ENCODE measurements at regions of chr2 and their contacts with region 1.

Region 1: DNA sequence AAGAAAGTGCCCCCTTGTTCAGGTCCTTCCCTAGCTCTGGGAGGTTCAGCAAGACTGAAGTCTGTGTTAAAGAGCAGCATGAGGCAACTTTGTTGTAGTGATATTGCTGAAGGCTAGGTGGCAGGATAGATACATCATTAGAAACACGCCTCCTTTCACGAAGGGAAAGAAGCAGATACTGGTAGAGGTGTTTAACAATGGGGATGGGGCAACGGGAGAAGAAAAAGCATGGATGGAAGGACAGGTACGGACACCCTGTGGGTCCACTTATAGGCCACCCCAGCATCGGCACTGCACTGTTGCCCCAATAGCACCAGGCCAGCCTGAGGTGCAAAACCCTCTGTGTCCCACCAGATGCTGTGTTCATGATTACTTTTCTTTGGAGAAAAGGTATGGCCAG is 3.5 kb upstream of the IGFBP5 start:
- DNase-seq: peak in 1 of 7 donors; percentile 38
- H3K4me3 ChIP-seq: no peak overlapping the region
- H3K27ac ChIP-seq: peak overlapping the region in 4 of 5 donors; percentile 5 to 42 (median 20)
- H3K4me1 ChIP-seq: peaks cover 16 to 49% of the 10 kb centered on the region in 2 donors
- H3K27me3 ChIP-seq: no peaks in the 10 kb centered on the region
- CTCF ChIP-seq: peak; percentile 30 to 82 (median 68)
- POLR2A ChIP-seq: no peak

Region 2: GRCh38 chr2:216619411-216620393 is 79.2 kb before region 1 on chr2:
- intact Hi-C with region 1: no loop called
- DNase-seq: no peak
- H3K4me3 ChIP-seq: no peak overlapping the region
- H3K27ac ChIP-seq: no peak overlapping the region
- H3K4me1 ChIP-seq: no peaks in the 10 kb centered on the region
- H3K27me3 ChIP-seq: no peaks in the 10 kb centered on the region
- CTCF ChIP-seq: no peak
- POLR2A ChIP-seq: no peak

Region 3: DNA sequence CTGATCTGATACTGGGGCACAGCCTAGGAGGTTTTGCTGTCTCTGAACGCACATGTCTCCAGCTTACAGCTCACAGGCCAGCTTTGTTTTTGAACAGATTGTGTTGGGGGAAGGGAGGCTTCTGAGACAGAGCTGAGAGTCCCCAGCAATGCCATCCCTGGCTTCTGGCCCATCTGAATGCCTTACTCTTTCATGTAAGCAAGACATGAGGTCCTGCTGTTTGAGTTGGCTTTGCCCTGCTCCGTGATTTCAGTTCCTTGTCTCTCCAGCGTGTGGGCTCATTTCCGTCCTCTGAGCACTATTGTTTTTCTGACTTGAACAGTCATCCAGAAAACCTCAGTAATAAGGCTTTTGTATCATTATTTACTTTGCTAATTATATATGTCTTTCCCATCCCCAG is 355.9 kb after region 1 on chr2:
- intact Hi-C with region 1: loop called in 1 of 2 experiments (anchors 10 kb)
- DNase-seq: no peak
- H3K4me3 ChIP-seq: no peak overlapping the region
- H3K27ac ChIP-seq: peak overlapping the region in 1 of 5 donors; percentile 14
- H3K4me1 ChIP-seq: no peaks in the 10 kb centered on the region
- H3K27me3 ChIP-seq: no peaks in the 10 kb centered on the region
- CTCF ChIP-seq: no peak
- POLR2A ChIP-seq: no peak

Region 4: GRCh38 chr2:217064234-217065024 is 365.5 kb after region 1 on chr2:
- intact Hi-C with region 1: loop called (anchors 10 kb)
- DNase-seq: peak; percentile 32 to 80 (median 52)
- H3K4me3 ChIP-seq: no peak overlapping the region
- H3K27ac ChIP-seq: peak overlapping the region in 3 of 5 donors; percentile 19 to 66 (median 41)
- H3K4me1 ChIP-seq: no peaks in the 10 kb centered on the region
- H3K27me3 ChIP-seq: no peaks in the 10 kb centered on the region
- CTCF ChIP-seq: no peak
- POLR2A ChIP-seq: no peak

Region 5: GRCh38 chr2:217166241-217166850 is 467.5 kb after region 1 on chr2:
- intact Hi-C with region 1: loop called (anchors 5 to 10 kb)
- DNase-seq: peak in 1 of 7 donors; percentile 11
- H3K4me3 ChIP-seq: no peak overlapping the region
- H3K27ac ChIP-seq: no peak overlapping the region
- H3K4me1 ChIP-seq: no peaks in the 10 kb centered on the region
- H3K27me3 ChIP-seq: no peaks in the 10 kb centered on the region
- CTCF ChIP-seq: peak; percentile 28 to 65 (median 56)
- POLR2A ChIP-seq: no peak

Region 6: DNA sequence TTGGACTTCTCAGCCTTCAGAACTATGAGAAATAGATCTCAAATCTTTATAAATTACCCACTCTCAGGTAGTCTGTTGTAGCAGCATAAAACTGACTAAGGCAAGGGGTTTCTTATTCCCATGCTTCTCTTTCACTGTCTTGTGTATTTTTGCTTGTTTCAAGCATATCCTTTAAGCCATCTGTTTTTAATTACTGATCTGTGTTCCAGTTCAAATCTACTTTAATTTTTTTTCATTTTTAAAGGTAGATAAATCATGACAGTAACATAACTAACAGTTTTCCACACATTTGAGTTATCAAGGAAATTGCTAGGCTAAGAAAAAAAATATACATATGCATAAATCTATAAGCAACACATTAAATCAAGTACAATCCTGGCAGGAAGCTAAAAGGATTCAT is 478.8 kb after region 1 on chr2:
- intact Hi-C with region 1: loop called in 1 of 2 experiments (anchors 10 kb)
- DNase-seq: no peak
- H3K4me3 ChIP-seq: no peak overlapping the region
- H3K27ac ChIP-seq: no peak overlapping the region
- H3K4me1 ChIP-seq: peaks cover 0 to 6% of the 10 kb centered on the region in 2 donors
- H3K27me3 ChIP-seq: no peaks in the 10 kb centered on the region
- CTCF ChIP-seq: no peak
- POLR2A ChIP-seq: no peak

Measured in adrenal gland (tissue), 19 donors.